ENCODE measurements at regions of chr20 and their contacts with region 1.

Region 1: DNA sequence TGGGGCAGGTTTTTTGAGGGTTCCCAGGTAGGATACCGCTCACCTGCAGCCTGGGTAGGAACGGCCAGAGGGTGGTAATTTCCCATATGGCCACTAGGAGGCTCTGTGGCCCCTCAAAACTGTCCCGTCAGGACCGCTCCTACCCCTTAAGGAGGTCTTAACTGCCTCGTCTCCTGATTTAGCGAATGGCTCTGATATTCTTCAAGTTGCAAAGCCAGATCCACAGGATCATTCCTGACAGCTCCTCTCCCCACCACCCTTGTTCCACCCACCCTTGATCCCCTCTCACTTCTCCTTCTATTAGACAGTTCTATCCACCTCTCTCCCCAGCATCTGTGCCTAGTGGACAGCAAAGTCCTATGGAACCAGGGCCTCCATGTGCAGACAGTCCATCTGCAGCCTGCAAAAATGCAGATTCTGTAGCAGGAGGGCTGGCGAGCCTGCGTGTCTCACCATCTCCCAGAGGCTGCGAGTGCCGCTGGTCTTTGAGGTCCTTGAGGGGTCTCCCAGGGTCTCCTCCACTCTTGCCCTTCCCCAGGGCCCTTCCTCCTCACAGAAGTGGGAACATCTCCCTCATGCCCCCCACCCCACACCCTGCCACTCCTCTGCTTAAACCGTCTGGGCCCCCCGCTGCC is 34.3 kb upstream of the ZBP1 start:
- DNase-seq: peak in 7 of 10 donors; percentile 56 to 91 (median 64)

Region 2: GRCh38 chr20:57594092-57594911 is 60.2 kb before region 1 on chr20:
- intact Hi-C with region 1: no loop called
- DNase-seq: peak in 6 of 10 donors; percentile 33 to 83 (median 52)

Region 3: DNA sequence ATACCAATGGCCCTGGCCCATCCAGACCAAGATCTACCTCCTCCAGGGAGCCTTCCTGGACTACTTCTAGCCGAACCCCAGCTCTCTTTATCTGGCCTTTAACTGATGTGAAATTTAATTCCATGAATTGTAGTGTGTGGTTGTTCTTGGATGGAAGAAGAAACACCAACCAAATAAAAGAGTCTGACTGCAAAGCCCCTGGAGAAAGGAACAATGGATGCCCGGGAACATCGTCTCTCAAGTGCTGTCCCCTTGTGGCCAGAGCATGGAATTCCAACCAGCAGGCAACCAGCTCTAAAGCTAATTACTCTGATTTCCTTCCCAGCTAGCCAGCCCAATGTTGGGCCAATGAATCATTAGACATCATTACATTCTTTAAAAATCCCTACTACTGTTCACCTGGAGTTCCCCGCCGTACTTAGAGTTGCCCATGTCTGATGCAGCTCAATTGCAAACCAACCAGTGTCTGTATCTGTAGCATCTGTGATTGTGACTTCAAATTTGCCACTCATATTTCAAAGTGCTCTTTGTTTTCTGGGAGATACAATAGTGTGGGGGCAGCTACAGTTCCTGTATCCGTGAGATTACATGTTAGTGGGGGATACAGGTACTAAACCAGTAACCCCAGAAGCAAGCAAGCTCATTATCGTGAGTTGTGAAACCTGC is 432.8 kb after region 1 on chr20:
- intact Hi-C with region 1: loop called (anchors 2 kb)
- DNase-seq: peak in 6 of 10 donors; percentile 24 to 86 (median 48)

Region 4: DNA sequence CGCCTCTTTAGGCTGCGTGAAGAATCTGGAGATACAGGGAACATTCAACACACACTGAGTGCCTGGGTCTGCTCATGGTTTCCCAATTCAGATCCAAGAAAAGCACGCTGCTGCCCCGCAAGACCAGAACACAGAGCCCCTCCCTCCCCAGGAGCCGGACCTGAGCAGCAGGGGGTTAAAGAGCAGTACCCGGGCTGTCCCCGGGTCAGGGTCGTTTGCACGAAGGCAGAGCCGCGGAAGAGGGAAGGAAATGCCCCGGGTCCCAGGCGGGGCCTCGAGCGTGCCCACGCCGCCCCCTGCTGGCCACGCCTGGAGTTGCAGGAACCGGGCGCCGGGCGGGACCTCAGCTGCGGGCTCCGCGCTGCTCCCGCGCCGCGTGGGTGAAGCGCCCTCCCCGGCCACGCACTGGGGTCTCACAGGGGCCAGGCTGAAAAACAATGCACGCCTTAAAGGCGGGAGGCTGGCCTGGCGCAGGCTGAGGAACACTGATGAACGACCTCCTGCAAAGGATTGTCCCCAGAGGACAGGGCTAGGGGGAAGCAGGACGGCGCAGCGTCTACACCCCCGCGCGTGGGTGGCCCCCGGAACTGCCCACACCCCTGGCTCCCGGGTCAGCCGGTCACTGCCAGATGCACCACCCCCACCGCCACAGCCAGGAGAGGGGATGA is 525.1 kb after region 1 on chr20:
- intact Hi-C with region 1: loop called (anchors 2 kb)
- DNase-seq: peak in 9 of 10 donors; percentile 34 to 93 (median 67)